GM18951 (cell line): ENCODE measurements at regions of chr9 and their contacts with region 1.

Region 1: DNA sequence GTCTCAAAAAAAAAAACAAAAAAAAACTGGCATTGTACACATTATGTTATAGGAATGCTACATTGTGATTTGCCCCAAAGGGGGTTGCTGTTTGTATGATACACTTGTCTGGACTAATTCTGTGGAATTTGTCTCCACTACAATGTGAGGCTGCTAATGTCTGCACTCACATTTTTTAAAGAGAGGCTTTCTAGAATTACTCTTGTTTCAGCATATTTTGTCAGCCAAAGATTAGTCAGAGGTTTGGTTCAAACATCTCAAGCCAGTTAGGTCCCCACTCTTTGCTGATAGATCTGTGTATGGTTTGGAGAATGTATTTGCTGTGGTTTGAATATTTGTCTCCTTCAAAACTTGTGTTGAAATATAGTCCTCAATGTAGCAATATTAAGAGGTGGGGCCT is 59.3 kb upstream of the ZNF169 start:
- POLR2A ChIP-seq: no peak

Region 2: DNA sequence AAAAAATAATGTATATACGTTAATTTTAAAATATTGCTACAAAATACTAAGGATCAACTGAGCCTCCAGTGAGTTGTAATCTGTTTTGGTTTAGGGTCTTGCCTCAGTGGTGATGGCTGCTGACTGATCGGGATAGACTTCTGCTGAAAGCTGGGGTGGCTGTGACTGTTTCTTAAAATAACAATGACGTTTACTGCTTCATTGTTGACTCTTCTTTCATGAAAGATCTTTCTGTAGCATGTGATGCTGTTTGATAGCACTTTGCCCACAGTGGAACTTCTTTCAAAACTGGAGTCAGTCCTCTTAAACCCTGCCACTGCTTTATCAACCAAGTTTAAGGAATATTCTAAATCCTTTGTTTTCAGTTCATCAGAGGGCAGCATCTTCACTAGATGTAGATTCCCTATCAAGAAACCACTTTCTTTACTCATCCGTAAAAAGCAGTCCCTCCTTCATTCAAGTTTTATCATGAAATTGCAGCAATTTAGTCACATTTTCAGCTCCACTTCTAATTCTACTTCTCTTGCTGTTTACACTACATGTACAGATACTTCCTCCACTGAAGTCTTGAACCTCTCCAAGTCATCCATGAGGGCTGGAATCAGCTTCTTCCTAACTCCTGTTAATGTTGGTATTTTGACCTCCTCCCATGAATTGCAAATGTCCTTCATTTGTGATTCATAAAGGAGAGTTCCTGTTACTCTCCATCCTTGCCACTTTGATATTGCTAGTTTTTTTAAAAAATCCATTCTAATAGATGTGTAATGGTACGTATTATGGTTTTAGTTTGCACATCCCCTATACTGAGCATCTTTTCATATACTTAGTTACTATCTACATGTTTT is 157.0 kb before region 1 on chr9:
- in situ Hi-C with region 1: no loop called
- POLR2A ChIP-seq: no peak

Region 3: GRCh38 chr9:94076557-94076956 is 123.2 kb before region 1 on chr9:
- in situ Hi-C with region 1: loop called (anchors 10 kb)
- POLR2A ChIP-seq: no peak